WTC11 (cell line): ENCODE measurements at regions of chr6 and their contacts with region 1.

Region 1: DNA sequence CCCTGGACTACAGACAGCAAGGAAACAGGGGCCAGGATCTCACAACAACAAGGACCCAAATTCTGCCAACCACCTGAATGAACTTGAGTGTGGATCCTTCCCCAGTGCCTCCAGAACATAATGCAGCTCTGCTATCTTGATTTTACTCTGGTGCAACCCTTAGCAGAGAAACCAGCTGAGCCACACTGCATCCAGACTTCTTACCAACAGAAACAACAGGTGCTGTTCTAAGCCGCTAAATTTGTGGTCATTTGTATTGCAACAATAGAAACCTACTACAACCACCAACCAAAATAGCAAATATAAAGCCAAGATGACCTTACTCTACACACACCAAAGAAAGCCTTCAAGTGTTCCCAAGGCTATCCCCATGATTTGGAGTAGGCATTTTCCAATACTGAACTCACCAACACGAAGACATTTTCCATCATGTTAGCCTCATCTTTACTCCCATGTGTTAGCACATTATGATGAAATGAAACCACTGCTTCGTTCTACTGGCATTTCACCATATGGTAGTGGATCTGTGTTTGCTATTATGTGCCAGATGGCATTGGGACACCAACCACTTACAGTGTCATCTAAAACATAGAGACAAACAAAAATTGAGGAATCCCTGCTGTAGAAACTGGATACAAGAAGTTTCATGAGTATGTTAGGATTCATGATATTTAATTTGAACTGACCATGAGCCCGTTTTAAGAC is 249.8 kb upstream of the ID4 start:
- DNase-seq: no peak
- ATAC-seq: no peak
- H3K4me3 Mint-ChIP-seq: no peak overlapping the region
- H3K27ac Mint-ChIP-seq: no peak overlapping the region
- H3K4me1 Mint-ChIP-seq: no peaks in the 10 kb centered on the region
- H3K27me3 Mint-ChIP-seq: no peaks in the 10 kb centered on the region
- CTCF ChIP-seq: no peak

Region 2: DNA sequence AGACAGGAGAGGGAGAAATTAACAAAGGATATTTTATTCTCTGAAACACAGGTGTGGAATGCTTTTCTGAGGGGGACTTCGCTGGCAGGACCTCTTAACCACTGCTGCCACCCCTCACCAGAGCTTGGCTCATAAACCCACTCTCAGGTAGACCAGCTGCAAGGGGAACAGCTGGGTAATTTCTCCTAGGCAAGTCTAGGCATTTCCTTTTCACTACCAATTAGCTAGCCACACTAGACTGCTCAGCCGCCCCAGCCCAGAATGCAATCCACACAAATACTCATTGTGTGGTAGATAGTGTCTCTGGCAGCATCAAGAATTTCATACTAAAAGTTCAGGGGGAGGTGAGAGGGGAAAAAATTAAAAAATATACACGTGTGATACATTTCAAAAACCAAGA is 17.8 kb before region 1 on chr6:
- CTCF ChIA-PET with region 1: no interaction called
- POLR2A ChIA-PET with region 1: no interaction called
- DNase-seq: no peak
- ATAC-seq: peak; percentile 26
- H3K4me3 Mint-ChIP-seq: no peak overlapping the region
- H3K27ac Mint-ChIP-seq: no peak overlapping the region
- H3K4me1 Mint-ChIP-seq: peaks cover 10% of the 10 kb centered on the region
- H3K27me3 Mint-ChIP-seq: no peaks in the 10 kb centered on the region
- CTCF ChIP-seq: no peak

Region 3: GRCh38 chr6:19830171-19830570 is 242.8 kb after region 1 on chr6:
- CTCF ChIA-PET with region 1: no interaction called
- POLR2A ChIA-PET with region 1: interaction called, 10 read pairs
- DNase-seq: no peak
- ATAC-seq: no peak
- H3K4me3 Mint-ChIP-seq: no peak overlapping the region
- H3K27ac Mint-ChIP-seq: no peak overlapping the region
- H3K4me1 Mint-ChIP-seq: 0 out of 2 replicates have a peak, but pooled peaks cover 4% of the 10 kb centered on the region
- H3K27me3 Mint-ChIP-seq: peaks cover 14% of the 10 kb centered on the region
- CTCF ChIP-seq: no peak